ENCODE measurements at regions of chr1 and their contacts with region 1.

Region 1: GRCh38 chr1:12229835-12230548 is at the start of gene VPS13D:
- DNase-seq: no peak
- H3K4me3 ChIP-seq: peak within 1 kb of the TSS; percentile 81
- CTCF ChIP-seq: peak; percentile 87

Region 2: GRCh38 chr1:12141128-12141850 is 88.7 kb before region 1 on chr1:
- CTCF ChIA-PET with region 1: no interaction called
- POLR2A ChIA-PET with region 1: no interaction called
- DNase-seq: no peak
- H3K4me3 ChIP-seq: no peak overlapping the region
- CTCF ChIP-seq: no peak

Region 3: GRCh38 chr1:12215118-12215961 is 14.7 kb before region 1 on chr1:
- CTCF ChIA-PET with region 1: interaction called, 30 read pairs
- POLR2A ChIA-PET with region 1: no interaction called
- DNase-seq: no peak
- H3K4me3 ChIP-seq: no peak overlapping the region
- CTCF ChIP-seq: no peak

Region 4: GRCh38 chr1:12407050-12407961 is 177.3 kb after region 1 on chr1:
- CTCF ChIA-PET with region 1: no interaction called
- POLR2A ChIA-PET with region 1: no interaction called
- DNase-seq: no peak
- H3K4me3 ChIP-seq: no peak overlapping the region
- CTCF ChIP-seq: peak; percentile 25

Measured in AG04449 (cell line).